ENCODE measurements at regions of chr9 and their contacts with region 1.

Region 1: DNA sequence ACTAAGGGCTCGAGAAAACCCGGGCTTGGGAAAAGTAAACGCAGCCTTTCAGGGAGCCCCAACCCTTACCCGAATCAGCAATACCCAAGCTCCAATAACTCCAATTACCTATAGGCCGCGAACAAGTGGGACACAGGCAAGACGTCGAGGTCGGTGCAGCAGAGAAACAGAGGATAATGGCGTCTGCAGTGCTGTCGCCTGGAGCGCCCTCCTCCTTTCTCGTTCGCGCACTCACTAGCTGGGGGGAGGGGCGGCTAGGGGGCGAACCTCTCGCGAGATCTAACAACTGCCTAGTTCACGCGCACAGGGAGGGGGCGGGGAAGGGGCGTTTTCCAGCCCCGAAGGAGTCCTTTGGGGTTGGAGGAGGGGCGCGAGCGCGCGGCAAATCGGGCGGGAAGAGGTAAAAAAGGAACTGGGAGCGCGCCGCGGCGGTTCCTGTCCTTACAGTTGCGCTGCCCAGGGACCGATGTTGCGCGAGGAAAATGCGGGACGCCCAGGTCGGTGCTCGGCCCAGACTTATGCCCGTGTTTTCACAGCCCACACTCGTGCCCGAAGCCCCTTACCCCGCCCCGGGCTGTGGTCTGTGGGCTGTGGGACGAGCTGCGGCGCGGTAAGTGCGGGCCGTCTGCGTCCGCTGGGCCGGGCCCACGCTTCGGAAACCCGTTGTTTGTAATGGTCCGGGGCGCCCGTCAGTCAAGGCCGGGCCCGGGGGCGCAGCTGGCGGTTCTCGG is at the start of gene RMI1:
- DNase-seq: peak; percentile 99
- ATAC-seq: peak; percentile 83
- H3K4me3 Mint-ChIP-seq: peak within 1 kb of the TSS; percentile 99
- H3K27ac Mint-ChIP-seq: peak within 1 kb of the TSS; percentile 100
- H3K4me1 Mint-ChIP-seq: peaks cover 42% of the 10 kb centered on the region
- H3K27me3 Mint-ChIP-seq: peaks cover 2% of the 10 kb centered on the region
- CTCF ChIP-seq: no peak
- total RNA-seq, gene RMI1: 23.9 to 26.7 TPM (median 25.8 TPM) in 3 replicates

Region 2: DNA sequence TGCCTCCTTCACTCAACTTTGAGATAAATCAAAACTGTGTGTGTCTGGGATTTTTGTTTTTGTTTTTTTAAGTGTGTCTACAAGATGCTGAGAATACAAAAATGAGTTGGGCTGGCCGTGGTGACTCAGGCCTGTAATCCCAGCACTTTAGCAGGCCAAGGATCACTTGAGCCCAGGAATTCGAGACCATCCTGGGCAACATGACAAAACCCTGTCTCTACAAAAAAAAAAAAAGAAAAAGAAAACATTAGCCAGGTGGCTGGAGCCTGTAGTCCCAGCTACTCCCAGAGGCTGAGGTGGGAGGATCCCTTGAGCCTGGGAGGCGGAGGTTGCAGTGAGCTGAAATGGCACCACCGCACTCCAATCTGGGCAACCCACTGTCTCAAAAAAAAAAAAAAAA is 21.5 kb before region 1 on chr9:
- CTCF ChIA-PET with region 1: no interaction called
- POLR2A ChIA-PET with region 1: interaction called, 24 read pairs
- DNase-seq: no peak
- ATAC-seq: no peak
- H3K4me3 Mint-ChIP-seq: no peak overlapping the region
- H3K27ac Mint-ChIP-seq: no peak overlapping the region
- H3K4me1 Mint-ChIP-seq: peaks cover 14% of the 10 kb centered on the region
- H3K27me3 Mint-ChIP-seq: peaks cover 25% of the 10 kb centered on the region
- CTCF ChIP-seq: no peak

Region 3: DNA sequence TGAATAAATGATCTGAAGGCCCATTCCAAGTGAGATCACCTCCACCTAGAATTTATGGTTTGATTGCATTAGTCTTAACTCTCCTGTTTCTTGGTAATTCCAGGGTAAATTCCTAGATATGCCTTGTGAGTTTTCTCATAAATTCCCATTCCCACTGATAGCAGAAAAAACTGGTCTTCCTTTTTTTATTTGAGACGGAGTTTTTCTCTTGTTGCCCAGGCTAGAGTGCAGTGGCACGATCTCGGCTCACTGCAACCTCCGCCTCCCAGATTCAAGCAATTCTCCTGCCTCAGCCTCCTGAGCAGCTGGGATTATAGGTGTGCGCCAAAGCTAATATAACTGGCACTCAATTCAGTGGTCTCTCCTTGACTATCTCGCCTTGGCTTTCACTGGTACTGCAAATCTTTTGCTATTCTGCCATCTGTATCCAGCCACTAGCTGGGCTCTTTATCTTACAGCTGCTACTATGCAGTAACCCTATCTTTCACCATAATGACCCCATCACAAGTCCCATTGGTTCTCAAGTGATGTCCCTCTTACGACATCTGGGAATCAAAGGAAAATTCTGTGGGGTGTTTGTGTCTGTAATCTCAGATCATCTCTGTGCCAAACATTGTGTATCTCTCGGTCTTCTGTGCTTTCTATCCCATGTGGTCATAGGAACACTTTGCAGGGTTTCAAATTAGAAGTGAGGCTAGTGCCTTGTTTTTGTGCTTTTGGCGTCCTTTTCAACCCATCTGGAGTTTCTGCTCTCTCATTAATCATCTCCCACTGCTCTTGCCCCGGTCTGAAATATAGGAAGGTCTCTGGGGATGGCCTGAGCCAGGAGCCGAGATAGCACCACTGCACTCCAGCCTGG is 15.0 kb before region 1 on chr9:
- CTCF ChIA-PET with region 1: no interaction called
- POLR2A ChIA-PET with region 1: interaction called, 24 read pairs
- DNase-seq: no peak
- ATAC-seq: peak; percentile 46
- H3K4me3 Mint-ChIP-seq: no peak overlapping the region
- H3K27ac Mint-ChIP-seq: peak overlapping the region; percentile 91
- H3K4me1 Mint-ChIP-seq: no peaks in the 10 kb centered on the region
- H3K27me3 Mint-ChIP-seq: no peaks in the 10 kb centered on the region
- CTCF ChIP-seq: no peak

Region 4: DNA sequence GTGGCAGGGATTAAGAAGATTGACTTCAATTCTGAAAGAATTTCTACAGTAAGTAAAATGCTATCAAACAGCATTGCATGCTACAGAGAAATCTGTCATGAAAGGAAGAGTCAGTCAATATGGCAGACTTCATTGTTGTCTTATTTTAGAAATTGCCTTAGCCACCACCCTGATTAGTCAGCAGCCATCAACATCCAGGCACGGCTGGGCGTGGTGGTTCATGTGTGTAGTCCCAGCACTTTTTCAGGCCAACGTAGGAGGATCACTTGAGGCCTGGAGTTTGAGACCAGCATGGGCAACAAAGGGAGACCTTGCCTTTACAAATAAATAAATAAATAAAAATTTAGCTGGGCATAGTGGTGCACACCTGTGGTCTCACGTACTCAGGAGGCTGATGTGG is 46.6 kb after region 1 on chr9:
- CTCF ChIA-PET with region 1: no interaction called
- POLR2A ChIA-PET with region 1: no interaction called
- DNase-seq: no peak
- ATAC-seq: no peak
- H3K4me3 Mint-ChIP-seq: no peak overlapping the region
- H3K27ac Mint-ChIP-seq: no peak overlapping the region
- H3K4me1 Mint-ChIP-seq: no peaks in the 10 kb centered on the region
- H3K27me3 Mint-ChIP-seq: no peaks in the 10 kb centered on the region
- CTCF ChIP-seq: no peak

Region 5: GRCh38 chr9:84163052-84163650 is 182.6 kb after region 1 on chr9:
- CTCF ChIA-PET with region 1: no interaction called
- POLR2A ChIA-PET with region 1: no interaction called
- DNase-seq: no peak
- ATAC-seq: no peak
- H3K4me3 Mint-ChIP-seq: no peak overlapping the region
- H3K27ac Mint-ChIP-seq: no peak overlapping the region
- H3K4me1 Mint-ChIP-seq: peaks cover 13% of the 10 kb centered on the region
- H3K27me3 Mint-ChIP-seq: peaks cover 6% of the 10 kb centered on the region; the same call in 1 of the 2 replicates
- CTCF ChIP-seq: no peak